ENCODE measurements at regions of chr1 and their contacts with region 1.

Region 1: GRCh38 chr1:90501281-90501680 is 215.8 kb downstream of the BARHL2 start:
- DNase-seq: no peak
- H3K4me3 ChIP-seq: no peak overlapping the region
- H3K27ac ChIP-seq: no peak overlapping the region
- H3K4me1 ChIP-seq: no peaks in the 10 kb centered on the region
- CTCF ChIP-seq: no peak

Region 2: GRCh38 chr1:90452491-90452890 is 48.8 kb before region 1 on chr1:
- CTCF ChIA-PET with region 1: no interaction called
- POLR2A ChIA-PET with region 1: no interaction called
- intact Hi-C with region 1: no loop called
- DNase-seq: no peak
- H3K4me3 ChIP-seq: no peak overlapping the region
- H3K27ac ChIP-seq: no peak overlapping the region
- H3K4me1 ChIP-seq: no peaks in the 10 kb centered on the region
- CTCF ChIP-seq: no peak

Region 3: GRCh38 chr1:90534663-90535295 is 33.5 kb after region 1 on chr1:
- CTCF ChIA-PET with region 1: no interaction called
- POLR2A ChIA-PET with region 1: interaction called, 10 read pairs
- intact Hi-C with region 1: no loop called
- DNase-seq: no peak
- H3K4me3 ChIP-seq: no peak overlapping the region
- H3K27ac ChIP-seq: no peak overlapping the region
- H3K4me1 ChIP-seq: no peaks in the 10 kb centered on the region
- CTCF ChIP-seq: no peak